Activated T-helper 1 cell treated with anti-CD3 and anti-CD28 coated beads, Interleukin-12 subunit alpha, Interleukin-12 subunit beta, Interleukin-2, Interleukin-4 antibody, amounts not matched to agents 30 ng/mL and 10 ng/mL and 1 ng/mL, durations not matched to agents 14 hours and 24 hours and 36 hours (primary cell): ENCODE measurements at regions of chr4 and their contacts with region 1.

Region 1: DNA sequence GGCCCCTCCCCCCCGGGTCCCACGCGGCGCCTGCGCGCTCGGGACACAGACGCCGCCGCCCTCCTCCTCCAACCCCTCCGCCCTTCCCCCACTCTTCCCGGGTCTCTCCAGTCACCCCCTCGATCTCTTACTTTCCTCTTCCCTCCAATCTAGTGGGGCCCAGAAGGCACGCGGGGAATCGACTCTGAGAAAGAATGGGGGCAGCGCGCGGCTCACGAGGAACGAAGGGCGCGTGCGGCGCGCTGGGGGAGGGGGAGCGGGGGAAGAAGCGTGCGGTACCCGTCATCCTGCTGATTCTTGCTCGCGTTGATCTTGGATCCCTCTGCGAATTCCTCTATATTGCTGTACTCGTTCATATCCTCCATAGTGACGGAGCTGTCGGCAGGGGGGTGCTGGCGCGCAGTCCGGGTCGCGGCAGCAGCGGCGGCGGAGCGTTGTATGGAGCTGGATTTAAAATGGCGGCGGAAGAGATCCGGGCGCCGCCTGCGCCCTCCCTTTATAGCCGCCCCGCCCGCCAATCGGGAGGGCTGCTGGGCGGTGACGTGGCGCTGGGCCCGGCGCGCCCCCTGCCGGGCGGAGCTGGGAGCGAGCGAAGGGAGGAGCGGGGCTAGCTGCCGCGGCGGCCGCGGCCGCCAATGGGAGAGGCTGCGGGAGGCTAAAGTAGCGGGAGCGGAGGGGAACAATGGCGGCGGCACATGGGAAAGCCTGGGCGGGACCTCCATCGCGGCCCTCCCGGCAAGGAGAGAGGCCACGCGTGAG is 1.1 kb downstream of the HNRNPDL start:
- DNase-seq: peak; percentile 90
- H3K4me3 Mint-ChIP-seq: peak overlapping the region; percentile 99
- H3K27ac Mint-ChIP-seq: peak overlapping the region; percentile 99
- H3K4me1 Mint-ChIP-seq: peaks cover 69% of the 10 kb centered on the region
- H3K27me3 Mint-ChIP-seq: no peaks in the 10 kb centered on the region

Region 2: DNA sequence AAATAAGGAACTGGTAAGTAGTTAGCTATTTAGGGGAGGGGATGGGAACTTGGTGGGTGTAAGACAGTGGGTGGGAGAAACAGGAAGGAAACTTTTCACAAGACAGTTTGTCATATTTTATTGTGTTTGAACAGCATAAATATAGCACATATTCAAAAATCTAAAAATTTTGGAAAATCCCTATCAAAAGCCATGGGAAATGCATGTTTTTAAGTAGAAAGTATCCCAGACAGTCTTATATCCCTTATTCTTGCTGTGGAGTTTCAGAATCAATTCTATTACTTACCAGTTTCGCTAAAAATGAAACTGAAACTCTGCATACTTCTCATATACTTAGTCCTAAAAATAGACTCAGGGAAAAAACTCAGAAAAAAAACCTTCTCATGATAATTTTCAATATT is 935.1 kb before region 1 on chr4:
- intact Hi-C with region 1: loop called (anchors 2 kb)
- DNase-seq: no peak
- H3K4me3 Mint-ChIP-seq: peak overlapping the region; percentile 50
- H3K27ac Mint-ChIP-seq: peak overlapping the region; percentile 25
- H3K4me1 Mint-ChIP-seq: peaks cover 43% of the 10 kb centered on the region
- H3K27me3 Mint-ChIP-seq: peaks cover 10% of the 10 kb centered on the region

Region 3: DNA sequence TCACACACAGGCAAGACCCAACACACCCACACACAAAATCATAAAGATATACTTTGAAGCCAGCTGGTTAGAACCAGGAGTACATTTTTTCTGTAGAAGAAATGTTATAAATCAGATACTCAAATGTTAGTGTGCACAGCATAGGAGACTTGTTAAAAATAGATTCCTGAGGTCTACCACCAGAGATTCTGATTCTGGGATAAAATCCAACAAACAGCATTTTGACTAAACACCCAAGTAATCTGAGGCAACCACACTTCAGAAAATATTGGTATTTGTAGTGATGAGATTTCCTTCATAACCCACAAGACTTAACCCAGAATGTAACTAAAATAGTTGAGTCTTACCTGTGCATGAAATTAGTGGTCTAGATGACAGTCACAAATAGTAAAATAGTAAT is 357.2 kb before region 1 on chr4:
- intact Hi-C with region 1: no loop called
- DNase-seq: no peak
- H3K4me3 Mint-ChIP-seq: no peak overlapping the region
- H3K27ac Mint-ChIP-seq: no peak overlapping the region
- H3K4me1 Mint-ChIP-seq: no peaks in the 10 kb centered on the region
- H3K27me3 Mint-ChIP-seq: peaks cover 5% of the 10 kb centered on the region

Region 4: DNA sequence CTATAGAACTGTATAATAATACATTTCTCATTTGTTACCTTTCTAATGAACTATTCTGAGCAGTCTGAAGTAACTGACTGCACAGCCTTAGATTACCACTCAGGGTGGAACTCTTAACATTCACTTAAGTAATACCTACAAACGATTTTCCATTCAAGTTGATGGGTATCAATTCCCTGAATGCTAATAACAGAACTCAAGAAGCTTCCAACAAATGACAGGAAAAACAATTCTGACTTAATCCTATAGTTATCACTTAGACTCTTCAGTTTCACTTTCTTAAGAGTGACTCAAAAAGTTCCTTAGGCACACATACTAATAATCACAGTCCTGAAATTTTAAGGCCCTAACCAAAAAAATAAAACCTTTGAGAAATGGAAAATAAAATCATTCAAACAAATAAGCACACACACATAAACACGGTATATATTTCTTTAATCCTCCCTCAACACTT is 76.2 kb before region 1 on chr4:
- intact Hi-C with region 1: loop called (anchors 2 kb)
- DNase-seq: no peak
- H3K4me3 Mint-ChIP-seq: no peak overlapping the region
- H3K27ac Mint-ChIP-seq: peak overlapping the region; percentile 77
- H3K4me1 Mint-ChIP-seq: peaks cover 42% of the 10 kb centered on the region
- H3K27me3 Mint-ChIP-seq: no peaks in the 10 kb centered on the region

Region 5: DNA sequence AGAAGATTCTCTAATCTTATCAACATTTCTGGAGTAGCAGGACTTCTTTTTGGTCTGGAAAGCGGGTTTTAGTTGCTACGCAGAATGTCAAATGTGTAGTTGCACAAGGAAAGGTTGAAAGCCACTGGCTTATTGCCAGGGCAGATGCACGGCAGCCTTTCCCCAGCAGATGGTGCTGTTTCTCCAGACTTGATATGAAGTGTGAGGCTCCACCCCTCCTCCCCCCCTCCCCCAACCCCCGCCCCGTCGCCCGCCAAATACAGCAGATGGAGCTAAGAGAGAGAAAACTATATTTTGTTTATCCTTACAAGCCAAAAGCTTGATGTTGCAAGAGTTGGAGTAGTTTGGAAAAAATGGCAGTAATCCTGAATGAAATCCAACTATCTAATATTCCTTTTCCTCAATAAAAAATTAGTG is 33.3 kb after region 1 on chr4:
- intact Hi-C with region 1: loop called (anchors 2 kb)
- DNase-seq: peak; percentile 65
- H3K4me3 Mint-ChIP-seq: no peak overlapping the region
- H3K27ac Mint-ChIP-seq: no peak overlapping the region
- H3K4me1 Mint-ChIP-seq: peaks cover 5% of the 10 kb centered on the region
- H3K27me3 Mint-ChIP-seq: no peaks in the 10 kb centered on the region

Region 6: GRCh38 chr4:82694046-82694445 is 264.9 kb after region 1 on chr4:
- intact Hi-C with region 1: no loop called
- DNase-seq: no peak
- H3K4me3 Mint-ChIP-seq: no peak overlapping the region
- H3K27ac Mint-ChIP-seq: no peak overlapping the region
- H3K4me1 Mint-ChIP-seq: no peaks in the 10 kb centered on the region
- H3K27me3 Mint-ChIP-seq: peaks cover 4% of the 10 kb centered on the region

Region 7: DNA sequence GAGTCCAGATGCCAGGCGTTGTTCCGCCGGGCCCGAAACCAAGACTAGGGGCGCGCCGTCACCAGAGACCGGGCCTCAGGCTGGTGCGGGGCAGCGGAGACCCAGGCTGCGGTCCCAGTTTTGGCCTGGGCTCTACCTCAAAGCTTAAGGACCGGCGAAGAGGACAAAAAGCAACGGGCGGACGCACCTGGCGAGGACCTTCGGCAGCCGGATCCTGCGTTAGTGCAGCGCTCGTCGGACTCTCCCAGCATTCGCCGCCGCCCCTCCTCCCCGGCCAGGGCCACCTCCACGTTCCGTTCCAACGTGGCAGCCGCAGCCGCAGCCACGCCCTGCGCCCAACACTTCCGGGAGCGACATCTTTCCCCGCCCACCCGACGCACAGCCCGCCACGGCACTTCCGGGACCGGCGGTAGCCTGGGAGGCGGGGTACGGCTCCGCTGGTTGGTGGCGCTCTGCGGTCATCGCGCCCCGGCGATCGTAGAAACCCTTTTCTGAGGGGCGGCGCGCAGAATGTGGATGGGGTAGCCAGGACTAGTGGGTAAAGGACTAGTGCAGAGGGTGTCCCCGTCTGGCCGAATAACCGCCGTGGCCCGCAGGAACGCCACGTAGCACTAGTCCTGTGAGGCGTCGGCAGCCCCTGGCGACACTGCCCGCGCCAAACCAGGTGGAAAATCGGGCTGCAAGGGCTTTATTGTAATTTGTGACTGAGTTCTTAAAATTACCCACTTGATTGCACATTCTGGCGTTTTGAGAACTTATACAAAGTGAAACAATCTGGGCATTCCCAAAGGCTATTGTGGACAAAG is 462.0 kb after region 1 on chr4 and contains the start of gene SEC31A:
- intact Hi-C with region 1: loop called (anchors 2 kb)
- DNase-seq: peak; percentile 96
- H3K4me3 Mint-ChIP-seq: peak within 1 kb of the TSS; percentile 88
- H3K27ac Mint-ChIP-seq: peak within 1 kb of the TSS; percentile 86
- H3K4me1 Mint-ChIP-seq: peaks cover 51% of the 10 kb centered on the region
- H3K27me3 Mint-ChIP-seq: no peaks in the 10 kb centered on the region
- total RNA-seq, gene SEC31A: 118 and 123 TPM in 2 replicates

Region 8: GRCh38 chr4:83034630-83035494 is 605.7 kb after region 1 on chr4 and contains the start of gene COPS4:
- intact Hi-C with region 1: loop called (anchors 1 kb)
- DNase-seq: peak; percentile 95
- H3K4me3 Mint-ChIP-seq: peak within 1 kb of the TSS; percentile 98
- H3K27ac Mint-ChIP-seq: peak within 1 kb of the TSS; percentile 99
- H3K4me1 Mint-ChIP-seq: peaks cover 20% of the 10 kb centered on the region
- H3K27me3 Mint-ChIP-seq: peaks cover 6% of the 10 kb centered on the region
- total RNA-seq, gene COPS4: 35.8 and 38.8 TPM in 2 replicates

Region 9: DNA sequence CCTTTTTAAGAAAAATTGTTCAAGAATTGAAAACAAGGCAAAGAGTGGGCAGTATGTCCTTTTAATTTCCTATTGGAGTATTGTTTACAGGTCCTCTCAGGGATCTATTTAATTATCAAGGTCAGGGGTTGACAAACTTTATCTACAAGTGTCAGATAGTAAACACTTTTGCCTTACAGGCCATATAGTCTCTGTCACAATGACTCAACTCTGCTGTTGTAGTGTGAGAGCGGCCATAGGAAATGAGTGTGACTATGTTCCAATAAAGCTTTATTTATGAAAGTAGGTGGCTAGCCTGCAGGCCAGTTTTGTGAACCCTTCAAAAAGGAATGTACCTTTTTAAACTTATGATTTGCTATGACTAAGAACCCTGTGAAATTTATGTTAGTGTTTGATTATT is 1262.8 kb after region 1 on chr4:
- intact Hi-C with region 1: no loop called
- DNase-seq: no peak
- H3K4me3 Mint-ChIP-seq: no peak overlapping the region
- H3K27ac Mint-ChIP-seq: no peak overlapping the region
- H3K4me1 Mint-ChIP-seq: no peaks in the 10 kb centered on the region
- H3K27me3 Mint-ChIP-seq: peaks cover 2% of the 10 kb centered on the region